ENCODE measurements at regions of chr1 and their contacts with region 1.

Region 1: GRCh38 chr1:205273551-205273982 is 45.8 kb downstream of the TMCC2 start:
- DNase-seq: peak; percentile 89
- ATAC-seq: peak; percentile 93
- H3K4me3 Mint-ChIP-seq: no peak overlapping the region
- H3K27ac Mint-ChIP-seq: no peak overlapping the region
- H3K4me1 Mint-ChIP-seq: peaks cover 22% of the 10 kb centered on the region
- H3K27me3 Mint-ChIP-seq: peaks cover 11% of the 10 kb centered on the region

Region 2: GRCh38 chr1:205284343-205285144 is 11.0 kb after region 1 on chr1:
- CTCF ChIA-PET with region 1: interaction called, 124 read pairs
- POLR2A ChIA-PET with region 1: interaction called, 5 read pairs
- DNase-seq: peak; percentile 95
- ATAC-seq: peak; percentile 67
- H3K4me3 Mint-ChIP-seq: peak overlapping the region; percentile 74
- H3K27ac Mint-ChIP-seq: peak overlapping the region; percentile 66
- H3K4me1 Mint-ChIP-seq: peaks cover 80% of the 10 kb centered on the region
- H3K27me3 Mint-ChIP-seq: peaks cover 23% of the 10 kb centered on the region

Region 3: DNA sequence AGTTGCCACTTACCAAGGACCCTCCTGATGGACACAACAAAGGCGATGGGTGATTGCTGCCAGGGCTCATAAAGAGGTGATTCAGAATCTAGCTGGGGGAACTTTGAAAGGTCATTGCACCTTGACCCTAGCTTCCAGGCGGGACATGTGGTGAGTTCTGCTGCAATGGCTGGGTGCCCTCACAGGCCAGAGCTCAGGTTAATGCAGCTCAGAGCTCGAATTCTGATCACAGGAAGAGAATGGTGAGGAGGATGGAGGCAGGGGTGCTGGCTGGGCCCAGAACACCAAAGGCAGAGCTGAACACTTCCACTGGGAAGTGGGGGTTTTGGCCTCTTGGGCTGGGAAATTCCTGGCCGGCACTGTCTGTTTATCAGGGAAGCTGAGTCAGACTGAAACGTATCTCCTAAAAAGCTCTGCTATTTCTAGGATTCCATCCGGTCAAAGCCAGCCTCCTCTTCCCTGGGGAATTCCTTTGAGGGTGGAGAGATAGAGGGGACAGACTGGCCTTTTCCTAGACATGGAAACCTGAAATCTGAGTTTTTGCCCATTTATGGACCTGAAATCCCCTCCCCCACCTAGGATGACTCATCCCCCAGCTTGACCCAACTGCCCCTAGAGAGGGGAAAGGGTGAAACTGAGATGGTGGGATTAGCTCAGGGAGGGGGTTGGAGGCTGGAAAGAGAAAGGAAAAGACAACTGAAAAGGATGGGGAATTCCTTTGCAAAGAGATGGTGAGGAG is 20.8 kb after region 1 on chr1:
- CTCF ChIA-PET with region 1: interaction called, 29 read pairs
- POLR2A ChIA-PET with region 1: no interaction called
- DNase-seq: no peak
- ATAC-seq: no peak
- H3K4me3 Mint-ChIP-seq: no peak overlapping the region
- H3K27ac Mint-ChIP-seq: no peak overlapping the region
- H3K4me1 Mint-ChIP-seq: peaks cover 16% of the 10 kb centered on the region
- H3K27me3 Mint-ChIP-seq: peaks cover 30% of the 10 kb centered on the region

Region 4: GRCh38 chr1:205300886-205301821 is 27.6 kb after region 1 on chr1:
- CTCF ChIA-PET with region 1: interaction called, 29 read pairs
- POLR2A ChIA-PET with region 1: no interaction called
- DNase-seq: no peak
- ATAC-seq: no peak
- H3K4me3 Mint-ChIP-seq: no peak overlapping the region
- H3K27ac Mint-ChIP-seq: no peak overlapping the region
- H3K4me1 Mint-ChIP-seq: peaks cover 11% of the 10 kb centered on the region
- H3K27me3 Mint-ChIP-seq: peaks cover 4% of the 10 kb centered on the region

Region 5: GRCh38 chr1:205313563-205314308 is 40.2 kb after region 1 on chr1:
- CTCF ChIA-PET with region 1: interaction called, 1,266 read pairs
- POLR2A ChIA-PET with region 1: interaction called, 6 read pairs
- DNase-seq: peak; percentile 40
- ATAC-seq: peak; percentile 77
- H3K4me3 Mint-ChIP-seq: peak overlapping the region; percentile 60
- H3K27ac Mint-ChIP-seq: peak overlapping the region; percentile 82
- H3K4me1 Mint-ChIP-seq: peaks cover 55% of the 10 kb centered on the region
- H3K27me3 Mint-ChIP-seq: peaks cover 4% of the 10 kb centered on the region

Region 6: GRCh38 chr1:205321164-205321958 is 47.8 kb after region 1 on chr1 and contains the start of gene NUAK2:
- CTCF ChIA-PET with region 1: interaction called, 1,266 read pairs
- POLR2A ChIA-PET with region 1: interaction called, 5 read pairs
- DNase-seq: peak; percentile 69
- ATAC-seq: peak; percentile 79
- H3K4me3 Mint-ChIP-seq: peak within 1 kb of the TSS; percentile 87
- H3K27ac Mint-ChIP-seq: peak within 1 kb of the TSS; percentile 56
- H3K4me1 Mint-ChIP-seq: peaks cover 52% of the 10 kb centered on the region
- H3K27me3 Mint-ChIP-seq: peaks cover 36% of the 10 kb centered on the region
- total RNA-seq, gene NUAK2: 1.6 TPM

Region 7: GRCh38 chr1:205440476-205441317 is 167.1 kb after region 1 on chr1:
- CTCF ChIA-PET with region 1: interaction called, 10 read pairs
- POLR2A ChIA-PET with region 1: no interaction called
- DNase-seq: peak; percentile 85
- ATAC-seq: peak; percentile 96
- H3K4me3 Mint-ChIP-seq: peak overlapping the region; percentile 75
- H3K27ac Mint-ChIP-seq: peak overlapping the region; percentile 89
- H3K4me1 Mint-ChIP-seq: peaks cover 26% of the 10 kb centered on the region
- H3K27me3 Mint-ChIP-seq: peaks cover 9% of the 10 kb centered on the region

Measured in activated CD8-positive, alpha-beta T cell treated with anti-CD3 and anti-CD28 coated beads, Interleukin-2, amount 10 ng/mL, durations not matched to agents 7 days and 5 days (primary cell).